WTC11 (cell line): ENCODE measurements at regions of chr19 and their contacts with region 1.

Region 1: DNA sequence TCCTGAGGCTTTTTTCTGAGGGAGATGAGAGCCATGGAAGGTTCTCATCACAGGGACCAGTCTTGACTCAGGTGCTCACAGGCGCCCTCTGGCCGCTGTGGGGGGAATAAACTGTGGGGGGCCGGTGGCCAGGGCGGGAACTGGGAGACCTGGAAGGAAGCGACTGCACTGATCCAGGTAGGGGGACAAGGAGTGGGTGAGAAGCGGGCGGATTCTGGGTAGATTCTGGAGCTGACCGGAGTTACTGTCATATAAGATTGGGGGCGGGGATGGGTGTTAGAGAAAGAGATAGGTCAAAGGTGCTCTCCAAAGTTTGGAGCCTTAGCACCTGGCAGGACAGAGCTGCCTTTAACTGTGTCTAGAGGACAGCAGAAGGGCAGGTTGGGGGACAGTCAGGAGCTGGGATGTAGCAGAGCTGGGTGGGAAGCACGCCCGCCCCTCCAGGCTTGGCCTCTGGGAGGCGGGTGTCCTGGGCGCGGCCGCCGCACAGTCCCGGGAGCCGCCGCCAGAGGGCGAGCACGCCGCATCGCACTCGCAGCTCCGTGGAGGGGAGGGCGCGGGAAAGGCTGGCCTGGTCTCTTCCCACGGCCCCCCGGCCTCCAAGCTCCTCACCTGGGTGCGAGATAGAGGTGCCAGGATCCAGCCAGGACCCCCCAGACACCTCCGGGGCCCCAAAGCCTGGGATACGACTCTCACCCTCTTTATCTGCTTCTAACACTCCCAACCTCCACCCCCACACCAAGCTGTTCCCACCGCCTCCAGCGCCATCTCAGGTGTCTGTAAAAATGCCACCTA is 4.2 kb upstream of the DAND5 start:
- DNase-seq: peak; percentile 91
- ATAC-seq: peak; percentile 95
- H3K4me3 Mint-ChIP-seq: peak overlapping the region; percentile 71
- H3K27ac Mint-ChIP-seq: peak overlapping the region; percentile 65
- H3K4me1 Mint-ChIP-seq: 0 out of 2 replicates have a peak, but pooled peaks cover 5% of the 10 kb centered on the region
- H3K27me3 Mint-ChIP-seq: peaks cover 14% of the 10 kb centered on the region
- CTCF ChIP-seq: peak; percentile 85

Region 2: GRCh38 chr19:12749938-12750521 is 215.2 kb before region 1 on chr19:
- CTCF ChIA-PET with region 1: no interaction called
- POLR2A ChIA-PET with region 1: no interaction called
- DNase-seq: no peak
- ATAC-seq: no peak
- H3K4me3 Mint-ChIP-seq: no peak overlapping the region
- H3K27ac Mint-ChIP-seq: no peak overlapping the region
- H3K4me1 Mint-ChIP-seq: peaks cover 13% of the 10 kb centered on the region
- H3K27me3 Mint-ChIP-seq: peaks cover 39% of the 10 kb centered on the region
- CTCF ChIP-seq: no peak

Region 3: DNA sequence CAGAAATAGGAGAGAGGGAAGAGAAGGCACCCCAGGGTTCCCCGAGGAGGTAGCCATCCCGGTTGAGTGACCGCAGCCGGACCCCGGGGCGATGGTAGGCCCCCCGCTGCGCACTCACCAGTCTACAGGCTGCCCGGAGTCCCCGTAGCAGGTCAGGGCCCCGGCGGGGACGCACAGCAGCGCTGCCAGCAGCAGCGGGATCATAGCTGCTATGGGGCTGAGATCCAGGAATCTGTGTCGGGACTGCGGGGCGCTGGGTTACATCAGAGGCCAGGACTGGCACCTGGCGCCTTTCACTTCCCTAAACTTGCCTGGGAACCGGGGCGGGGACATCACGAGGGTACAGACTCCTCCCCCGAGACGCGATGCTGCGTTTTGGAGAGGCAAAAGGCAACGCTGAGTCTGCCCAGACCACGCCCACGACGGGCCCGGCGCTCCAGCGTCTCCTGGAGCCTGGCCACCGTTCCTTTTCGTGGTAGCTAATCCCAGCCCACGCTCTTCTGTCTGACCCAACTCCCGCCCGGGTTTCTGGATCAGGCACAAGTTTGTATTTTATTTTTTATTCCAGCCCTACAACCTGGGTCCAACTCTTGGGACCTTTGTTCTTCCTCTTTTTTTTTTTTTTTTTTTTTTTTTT is 83.9 kb before region 1 on chr19 and contains the start of gene DNASE2:
- CTCF ChIA-PET with region 1: interaction called, 63 read pairs
- POLR2A ChIA-PET with region 1: interaction called, 14 read pairs
- DNase-seq: peak; percentile 97
- ATAC-seq: peak; percentile 66
- H3K4me3 Mint-ChIP-seq: peak within 1 kb of the TSS; percentile 90
- H3K27ac Mint-ChIP-seq: peak within 1 kb of the TSS; percentile 94
- H3K4me1 Mint-ChIP-seq: peaks cover 8% of the 10 kb centered on the region
- H3K27me3 Mint-ChIP-seq: peaks cover 30% of the 10 kb centered on the region
- CTCF ChIP-seq: no peak
- total RNA-seq, gene DNASE2: 31.7 to 35.7 TPM (median 33.4 TPM) in 3 replicates

Region 4: GRCh38 chr19:12938234-12939025 is 26.8 kb before region 1 on chr19 and contains the start of gene CALR:
- CTCF ChIA-PET with region 1: interaction called, 20 read pairs
- POLR2A ChIA-PET with region 1: no interaction called
- DNase-seq: peak; percentile 99
- ATAC-seq: peak; percentile 90
- H3K4me3 Mint-ChIP-seq: peak within 1 kb of the TSS; percentile 99
- H3K27ac Mint-ChIP-seq: peak within 1 kb of the TSS; percentile 91
- H3K4me1 Mint-ChIP-seq: peaks cover 35% of the 10 kb centered on the region
- H3K27me3 Mint-ChIP-seq: no peaks in the 10 kb centered on the region
- CTCF ChIP-seq: no peak
- total RNA-seq, gene CALR: 977 to 1,088 TPM (median 978 TPM) in 3 replicates

Region 5: DNA sequence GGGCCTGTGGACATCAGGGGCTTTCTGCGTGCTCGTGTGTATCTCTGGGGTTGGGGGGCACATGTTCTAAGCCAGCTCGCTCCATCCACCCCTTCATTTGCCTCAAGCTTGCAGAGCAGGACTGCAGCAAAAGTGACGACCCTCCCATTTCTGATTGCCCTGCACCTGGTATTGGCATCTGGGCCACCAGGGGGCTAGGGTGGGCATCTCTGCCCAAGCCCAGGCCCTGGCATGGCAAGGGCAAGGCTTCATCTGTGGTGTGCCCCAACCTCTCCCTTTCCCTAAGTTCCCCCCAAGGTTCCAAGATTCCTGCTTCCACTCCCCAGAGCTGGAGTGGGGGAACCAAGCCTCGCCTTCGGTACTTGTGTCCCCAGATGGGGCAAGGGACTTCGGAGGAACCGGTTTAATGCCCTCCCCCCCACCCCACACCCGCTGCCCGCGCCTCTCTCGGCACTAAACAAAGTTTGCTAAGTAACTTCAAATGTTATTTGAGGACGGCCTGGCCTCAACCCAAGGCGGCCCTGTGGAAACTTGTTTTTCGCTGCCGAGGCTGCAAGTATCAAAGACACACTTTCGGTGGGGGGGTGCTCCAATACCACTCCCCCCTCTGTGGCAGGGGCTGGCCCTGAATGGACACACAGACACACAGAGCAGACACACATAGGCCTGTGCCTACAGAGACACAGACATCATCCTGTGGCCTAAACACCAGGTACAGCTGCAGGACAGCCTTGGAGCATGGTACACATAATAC is 42.3 kb after region 1 on chr19:
- CTCF ChIA-PET with region 1: interaction called, 14 read pairs
- POLR2A ChIA-PET with region 1: no interaction called
- DNase-seq: no peak
- ATAC-seq: no peak
- H3K4me3 Mint-ChIP-seq: no peak overlapping the region
- H3K27ac Mint-ChIP-seq: no peak overlapping the region
- H3K4me1 Mint-ChIP-seq: peaks cover 15% of the 10 kb centered on the region
- H3K27me3 Mint-ChIP-seq: peaks cover 96% of the 10 kb centered on the region
- CTCF ChIP-seq: no peak

Region 6: GRCh38 chr19:13044231-13044836 is 79.1 kb after region 1 on chr19:
- CTCF ChIA-PET with region 1: interaction called, 17 read pairs
- POLR2A ChIA-PET with region 1: no interaction called
- DNase-seq: no peak
- ATAC-seq: no peak
- H3K4me3 Mint-ChIP-seq: no peak overlapping the region
- H3K27ac Mint-ChIP-seq: no peak overlapping the region
- H3K4me1 Mint-ChIP-seq: peaks cover 4% of the 10 kb centered on the region
- H3K27me3 Mint-ChIP-seq: peaks cover 79% of the 10 kb centered on the region
- CTCF ChIP-seq: no peak

Region 7: GRCh38 chr19:13082192-13083007 is 117.2 kb after region 1 on chr19:
- CTCF ChIA-PET with region 1: interaction called, 38 read pairs
- POLR2A ChIA-PET with region 1: interaction called, 3 read pairs
- DNase-seq: peak; percentile 60
- ATAC-seq: peak; percentile 67
- H3K4me3 Mint-ChIP-seq: peak overlapping the region; percentile 40; the same call in 1 of the 2 replicates
- H3K27ac Mint-ChIP-seq: no peak overlapping the region
- H3K4me1 Mint-ChIP-seq: peaks cover 37% of the 10 kb centered on the region
- H3K27me3 Mint-ChIP-seq: peaks cover 19% of the 10 kb centered on the region
- CTCF ChIP-seq: no peak

Region 8: GRCh38 chr19:13195678-13196077 is 230.5 kb after region 1 on chr19:
- CTCF ChIA-PET with region 1: interaction called, 11 read pairs
- POLR2A ChIA-PET with region 1: no interaction called
- DNase-seq: peak; percentile 87
- ATAC-seq: peak; percentile 97
- H3K4me3 Mint-ChIP-seq: no peak overlapping the region
- H3K27ac Mint-ChIP-seq: no peak overlapping the region
- H3K4me1 Mint-ChIP-seq: no peaks in the 10 kb centered on the region
- H3K27me3 Mint-ChIP-seq: no peaks in the 10 kb centered on the region
- CTCF ChIP-seq: peak; percentile 71

Region 9: DNA sequence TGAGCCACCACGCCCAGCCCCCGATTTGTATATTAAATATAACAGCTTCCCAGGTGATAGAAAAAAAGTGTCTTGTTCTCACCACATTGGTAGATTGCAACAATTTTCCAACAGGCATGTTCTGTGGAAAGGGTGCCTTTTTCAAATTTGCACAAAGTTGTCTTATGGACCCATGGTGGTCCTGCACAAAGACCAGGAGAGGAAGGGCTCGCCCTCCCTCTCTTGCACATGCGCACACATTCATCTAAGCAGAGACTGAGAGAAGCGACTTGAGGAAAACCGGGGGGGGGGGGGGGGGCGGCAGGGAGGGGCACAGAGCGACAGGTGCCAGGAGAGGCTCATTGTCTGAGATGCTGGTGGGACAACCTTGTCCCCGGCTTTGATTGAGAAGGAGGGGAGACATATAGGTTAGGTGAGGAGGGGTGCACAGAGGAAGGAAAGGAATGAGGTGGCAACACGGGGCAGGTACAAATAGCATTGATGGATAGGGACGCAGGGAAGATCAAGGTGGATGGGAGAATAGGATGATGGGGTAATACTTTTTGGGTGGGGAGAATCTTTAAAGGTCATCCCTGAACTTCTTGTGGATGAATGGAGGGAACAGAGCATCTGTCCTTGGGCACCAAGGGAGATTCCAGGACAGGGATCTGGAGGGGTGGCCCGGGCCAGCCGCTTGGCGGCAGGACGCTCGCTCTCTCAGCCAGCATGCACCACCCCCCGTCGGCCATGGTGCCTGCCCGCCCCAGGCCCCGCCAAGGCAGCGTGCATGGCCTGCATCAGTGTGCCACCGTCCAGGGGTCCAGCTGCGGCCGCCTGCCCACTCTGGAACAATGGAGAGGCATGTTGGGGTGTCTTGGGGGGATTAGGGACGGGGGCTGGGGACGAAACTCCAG is 261.0 kb after region 1 on chr19:
- CTCF ChIA-PET with region 1: no interaction called
- POLR2A ChIA-PET with region 1: no interaction called
- DNase-seq: no peak
- ATAC-seq: no peak
- H3K4me3 Mint-ChIP-seq: no peak overlapping the region
- H3K27ac Mint-ChIP-seq: no peak overlapping the region; the same call in 1 of the 2 replicates
- H3K4me1 Mint-ChIP-seq: peaks cover 7% of the 10 kb centered on the region
- H3K27me3 Mint-ChIP-seq: no peaks in the 10 kb centered on the region
- CTCF ChIP-seq: no peak